ENCODE measurements at regions of chr7 and their contacts with region 1.

Region 1: GRCh38 chr7:16564909-16565426 is 38.3 kb downstream of the LRRC72 start:
- DNase-seq: no peak
- H3K4me3 ChIP-seq: no peak overlapping the region
- H3K27ac ChIP-seq: no peak overlapping the region
- H3K4me1 ChIP-seq: no peaks in the 10 kb centered on the region
- H3K27me3 ChIP-seq: no peaks in the 10 kb centered on the region
- CTCF ChIP-seq: peak; percentile 26 to 77 (median 64)

Region 2: GRCh38 chr7:15937571-15937970 is 627.4 kb before region 1 on chr7:
- intact Hi-C with region 1: no loop called
- DNase-seq: no peak
- H3K4me3 ChIP-seq: no peak overlapping the region
- H3K27ac ChIP-seq: no peak overlapping the region
- H3K4me1 ChIP-seq: no peaks in the 10 kb centered on the region
- H3K27me3 ChIP-seq: no peaks in the 10 kb centered on the region
- CTCF ChIP-seq: no peak

Region 3: GRCh38 chr7:16078076-16078952 is 486.7 kb before region 1 on chr7:
- intact Hi-C with region 1: loop called (anchors 1 kb)
- DNase-seq: no peak
- H3K4me3 ChIP-seq: no peak overlapping the region
- H3K27ac ChIP-seq: no peak overlapping the region
- H3K4me1 ChIP-seq: no peaks in the 10 kb centered on the region
- H3K27me3 ChIP-seq: no peaks in the 10 kb centered on the region
- CTCF ChIP-seq: peak; percentile 32 to 53 (median 45)

Region 4: GRCh38 chr7:16260236-16260728 is 304.7 kb before region 1 on chr7:
- intact Hi-C with region 1: no loop called
- DNase-seq: no peak
- H3K4me3 ChIP-seq: no peak overlapping the region
- H3K27ac ChIP-seq: no peak overlapping the region
- H3K4me1 ChIP-seq: no peaks in the 10 kb centered on the region
- H3K27me3 ChIP-seq: no peaks in the 10 kb centered on the region
- CTCF ChIP-seq: no peak

Region 5: GRCh38 chr7:16471933-16472332 is 93.0 kb before region 1 on chr7:
- intact Hi-C with region 1: no loop called
- DNase-seq: no peak
- H3K4me3 ChIP-seq: no peak overlapping the region
- H3K27ac ChIP-seq: no peak overlapping the region
- H3K4me1 ChIP-seq: no peaks in the 10 kb centered on the region
- H3K27me3 ChIP-seq: no peaks in the 10 kb centered on the region
- CTCF ChIP-seq: no peak

Measured in ascending aorta (tissue), 2 donors.